ENCODE measurements at regions of chr19 and their contacts with region 1.

Region 1: DNA sequence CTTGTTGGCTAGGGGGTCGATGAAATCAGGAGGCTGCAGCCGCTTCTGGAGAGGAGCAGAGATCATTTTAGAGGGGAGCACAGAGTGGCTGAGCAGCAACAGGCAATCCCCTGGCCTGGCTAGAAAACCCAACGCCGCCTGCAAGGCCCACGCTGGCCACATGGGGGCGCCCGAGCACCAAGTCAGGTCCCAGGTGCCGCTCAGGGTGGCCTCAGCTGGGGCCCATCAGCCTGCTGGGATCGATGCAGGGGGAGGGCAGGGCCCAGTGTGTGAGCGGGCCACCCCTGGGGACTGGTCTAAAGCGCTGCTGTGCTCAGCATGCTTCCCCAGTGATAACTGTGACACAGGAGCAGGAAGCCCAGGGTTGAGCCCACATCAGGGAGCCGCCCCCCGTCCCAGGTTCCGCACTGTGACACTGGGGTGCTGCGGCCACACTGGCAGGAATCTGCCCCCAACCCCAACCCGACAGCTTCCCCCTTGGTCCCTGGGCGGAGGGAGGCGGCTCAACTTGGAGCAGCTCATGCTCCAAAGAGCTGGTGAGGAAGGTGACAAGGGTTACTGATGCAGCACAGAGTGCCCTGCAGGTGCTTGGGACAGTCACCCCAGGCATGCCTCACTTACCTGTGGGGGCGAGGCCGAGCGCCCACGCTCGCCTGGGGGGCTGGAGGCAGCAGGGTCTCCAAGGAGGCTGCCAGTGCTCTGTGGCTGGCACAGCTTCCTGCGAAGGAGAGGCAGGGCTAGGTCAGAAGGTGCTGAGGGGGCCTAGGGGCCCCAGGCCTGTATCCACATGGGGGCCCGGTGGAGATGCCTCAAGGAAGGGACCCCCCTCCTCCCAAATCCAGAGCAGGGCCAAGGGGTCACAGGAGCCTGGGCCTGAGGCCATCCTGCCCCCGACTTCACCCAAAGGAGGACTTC is 13.3 kb upstream of the ISYNA1 start:
- ATAC-seq: peak; percentile 69 to 99 (median 98)
- H3K4me3 ChIP-seq: no peak overlapping the region
- H3K27ac ChIP-seq: peak overlapping the region; percentile 8 to 50
- H3K4me1 ChIP-seq: peaks cover 19 to 20% of the 10 kb centered on the region in 2 donors

Region 2: DNA sequence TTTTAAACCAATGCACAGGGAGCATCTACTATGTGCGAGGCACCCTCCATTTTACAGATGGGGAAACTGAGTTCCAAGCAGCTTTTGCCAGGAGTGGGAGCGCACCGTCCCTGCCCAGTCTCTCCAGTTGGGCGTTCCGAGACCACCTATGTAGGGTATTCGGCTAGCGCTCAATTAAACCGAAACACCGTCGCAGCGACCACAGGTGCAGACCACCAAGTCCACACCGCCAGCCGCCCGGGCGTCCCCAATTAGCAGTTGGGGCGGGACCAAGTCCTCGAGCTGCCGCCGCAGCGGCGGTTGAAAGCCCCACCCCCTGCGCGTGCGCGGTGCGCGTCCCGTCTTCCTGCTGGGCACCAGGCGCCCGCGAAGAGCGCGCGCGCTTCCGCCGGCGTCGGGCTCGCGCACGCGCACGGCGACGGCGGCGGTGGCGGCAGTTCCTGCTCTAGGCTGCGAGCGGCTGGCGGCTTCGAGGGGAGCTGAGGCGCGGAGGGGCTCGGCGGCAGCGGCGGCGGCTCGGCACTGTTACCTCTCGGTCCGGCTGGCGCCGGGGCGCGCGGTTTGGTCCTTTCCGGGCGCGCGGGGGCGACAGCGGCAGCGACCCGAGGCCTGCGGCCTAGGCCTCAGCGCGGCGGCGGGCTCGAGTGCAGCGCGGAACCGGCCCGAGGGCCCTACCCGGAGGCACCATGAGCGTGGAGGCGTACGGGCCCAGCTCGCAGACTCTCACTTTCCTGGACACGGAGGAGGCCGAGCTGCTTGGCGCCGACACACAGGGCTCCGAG is 380.5 kb after region 1 on chr19 and contains the start of gene UPF1:
- in situ Hi-C with region 1: loop called in 1 of 9 experiments (anchors 25 kb)
- ATAC-seq: peak; percentile 80 to 94 (median 92)
- H3K4me3 ChIP-seq: peak within 1 kb of the TSS; percentile 64 to 96 (median 82)
- H3K27ac ChIP-seq: peak within 1 kb of the TSS; percentile 43 to 82
- H3K4me1 ChIP-seq: peaks cover 12 to 16% of the 10 kb centered on the region in 2 donors
- total RNA-seq, gene UPF1: 19.0 to 61.6 (median 28.9) TPM

Region 3: DNA sequence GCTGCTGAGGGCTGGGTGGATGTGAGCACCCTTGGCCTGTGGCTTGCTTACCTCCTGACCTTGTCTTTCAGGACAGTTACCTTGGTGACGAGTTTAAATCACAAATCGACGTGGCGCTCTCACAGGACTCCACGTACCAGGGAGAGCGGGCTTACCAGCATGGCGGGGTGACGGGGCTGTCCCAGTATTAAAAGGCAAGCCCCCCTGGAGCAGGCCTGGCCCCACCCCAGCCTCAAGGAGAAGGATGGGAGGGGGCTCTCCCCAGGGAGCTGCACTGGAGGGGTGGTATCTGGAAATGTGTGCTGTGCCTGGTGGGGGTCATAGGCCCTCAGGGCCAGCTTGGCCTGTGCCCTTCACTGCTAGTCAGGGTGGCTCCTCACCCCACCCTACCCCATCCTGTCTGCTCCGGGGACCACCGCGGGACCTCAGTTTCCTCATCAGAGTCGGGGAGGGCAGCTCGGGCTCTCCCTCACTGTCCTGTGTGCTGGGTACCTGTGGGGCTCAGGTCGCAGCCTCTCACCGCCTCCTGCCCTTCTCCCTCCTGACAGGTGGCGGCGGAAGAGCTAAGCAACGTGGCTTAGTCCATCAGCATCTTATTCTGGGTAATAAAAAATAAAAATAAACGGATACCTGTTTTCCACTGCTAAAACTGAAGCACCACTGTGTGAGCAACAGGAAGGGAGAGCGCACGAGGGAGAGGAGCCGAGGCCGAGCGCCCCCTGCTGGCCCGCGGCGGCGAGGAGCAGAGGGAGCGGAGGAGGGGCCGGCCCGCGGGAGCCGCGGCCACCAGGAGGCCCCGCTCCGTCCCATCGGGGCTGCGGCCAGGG is 415.0 kb after region 1 on chr19:
- in situ Hi-C with region 1: loop called in 3 of 9 experiments (anchors 25 kb)
- ATAC-seq: peak; percentile 82 to 92 (median 84)
- H3K4me3 ChIP-seq: no peak overlapping the region
- H3K27ac ChIP-seq: no peak overlapping the region
- H3K4me1 ChIP-seq: no peaks in the 10 kb centered on the region

Region 4: GRCh38 chr19:19329126-19329525 is 877.9 kb after region 1 on chr19:
- in situ Hi-C with region 1: no loop called
- ATAC-seq: no peak
- H3K4me3 ChIP-seq: no peak overlapping the region
- H3K27ac ChIP-seq: no peak overlapping the region
- H3K4me1 ChIP-seq: no peaks in the 10 kb centered on the region

Measured in motor neuron (in vitro differentiated cells).